HepG2 (cell line): ENCODE measurements at regions of chr10 and their contacts with region 1.

Region 1: DNA sequence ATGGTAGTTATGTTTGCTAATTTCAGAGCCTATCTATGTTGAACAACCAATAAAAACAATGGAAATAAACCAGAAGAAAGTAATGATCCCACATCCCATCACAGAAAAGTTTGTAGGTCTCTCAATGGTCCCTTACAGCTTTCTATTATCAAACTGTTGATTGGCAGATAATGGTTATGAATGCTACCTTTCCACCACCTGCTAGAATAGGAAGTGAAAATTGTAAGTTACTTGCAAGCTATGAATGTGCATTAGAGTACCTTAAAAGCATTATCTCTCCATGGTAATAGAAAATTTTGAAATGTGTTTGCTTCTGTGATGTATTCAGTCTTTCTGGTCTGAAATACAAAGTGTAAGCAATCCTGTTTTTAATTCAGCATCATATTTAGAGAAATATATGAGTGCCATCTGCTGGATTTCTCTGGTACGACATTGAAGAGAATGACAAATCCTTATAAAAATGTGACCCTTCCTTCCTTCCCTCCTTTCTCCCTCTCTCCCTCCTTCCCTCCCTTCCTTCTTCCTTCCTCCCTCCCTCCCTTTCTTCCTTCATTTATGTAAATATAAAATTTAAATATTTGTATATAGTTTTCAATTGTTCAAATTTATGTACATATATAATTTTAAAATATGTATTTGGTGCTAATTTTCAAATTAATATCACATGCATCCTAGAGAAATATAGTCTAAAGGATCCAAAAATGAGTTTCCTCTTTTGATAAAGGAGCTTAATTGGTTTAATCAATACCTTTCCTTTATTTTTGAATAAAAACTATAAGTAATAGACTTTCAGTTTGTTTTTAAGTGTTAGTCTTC is 41.4 kb upstream of the PNLIPRP3 start:
- DNase-seq: peak; percentile 12
- ATAC-seq: no peak
- H3K4me3 ChIP-seq: no peak overlapping the region
- H3K27ac ChIP-seq: no peak overlapping the region
- H3K4me1 ChIP-seq: no peaks in the 10 kb centered on the region
- H3K27me3 ChIP-seq: no peaks in the 10 kb centered on the region
- CTCF ChIP-seq: peak; percentile 56
- EP300 ChIP-seq: no peak
- POLR2A ChIP-seq: no peak
- RAD21 ChIP-seq: no peak

Region 2: GRCh38 chr10:115706026-115706781 is 680.0 kb before region 1 on chr10:
- CTCF ChIA-PET with region 1: no interaction called
- POLR2A ChIA-PET with region 1: no interaction called
- in situ Hi-C with region 1: no loop called
- intact Hi-C with region 1: loop called (anchors 1 kb)
- DNase-seq: peak; percentile 1
- ATAC-seq: no peak
- H3K4me3 ChIP-seq: no peak overlapping the region
- H3K27ac ChIP-seq: no peak overlapping the region
- H3K4me1 ChIP-seq: no peaks in the 10 kb centered on the region
- H3K27me3 ChIP-seq: no peaks in the 10 kb centered on the region
- CTCF ChIP-seq: peak; percentile 38; the same call in 1 of the 2 replicates
- EP300 ChIP-seq: no peak
- POLR2A ChIP-seq: no peak
- RAD21 ChIP-seq: no peak

Region 3: DNA sequence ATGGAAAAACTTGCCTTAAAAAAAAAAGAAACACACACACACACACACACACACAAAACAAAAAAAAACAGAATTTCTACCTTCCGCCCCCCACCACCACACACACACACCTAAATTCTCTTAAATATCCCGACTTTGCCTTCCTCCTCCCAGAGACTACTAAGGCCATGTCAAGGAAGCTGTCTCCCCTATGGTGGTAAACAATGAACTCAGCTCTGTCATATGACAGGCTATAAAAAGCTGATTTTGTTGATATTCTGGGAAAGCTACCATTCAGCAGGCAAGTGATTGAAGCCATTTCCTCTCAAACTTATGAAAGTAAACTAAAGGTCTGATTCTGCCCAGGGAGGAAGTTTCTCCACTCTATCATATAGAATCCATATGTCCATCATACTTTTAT is 584.2 kb before region 1 on chr10:
- CTCF ChIA-PET with region 1: no interaction called
- POLR2A ChIA-PET with region 1: no interaction called
- in situ Hi-C with region 1: no loop called
- intact Hi-C with region 1: loop called (anchors 1 kb)
- DNase-seq: no peak
- ATAC-seq: no peak
- H3K4me3 ChIP-seq: no peak overlapping the region
- H3K27ac ChIP-seq: no peak overlapping the region
- H3K4me1 ChIP-seq: no peaks in the 10 kb centered on the region
- H3K27me3 ChIP-seq: no peaks in the 10 kb centered on the region; a peak in 1 of 5 replicates
- CTCF ChIP-seq: no peak
- EP300 ChIP-seq: no peak
- POLR2A ChIP-seq: no peak
- RAD21 ChIP-seq: no peak